ENCODE measurements at regions of chr9 and their contacts with region 1.

Region 1: GRCh38 chr9:99465231-99465907 is 243.3 kb downstream of the SEC61B start:
- DNase-seq: peak in 1 of 2 donors; percentile 79
- ATAC-seq: peak; percentile 76
- H3K4me3 ChIP-seq: no peak overlapping the region
- H3K27ac ChIP-seq: peak overlapping the region in 1 of 2 donors; percentile 70
- H3K4me1 ChIP-seq: peaks cover 0 to 7% of the 10 kb centered on the region in 2 donors
- H3K27me3 ChIP-seq: no peaks in the 10 kb centered on the region

Region 2: GRCh38 chr9:99368341-99369323 is 96.7 kb before region 1 on chr9:
- intact Hi-C with region 1: loop called in 1 of 2 experiments (anchors 10 kb)
- DNase-seq: peak; percentile 76 to 93
- ATAC-seq: peak; percentile 90
- H3K4me3 ChIP-seq: peak overlapping the region; percentile 32 to 42
- H3K27ac ChIP-seq: peak overlapping the region; percentile 38 to 77
- H3K4me1 ChIP-seq: no peaks in the 10 kb centered on the region
- H3K27me3 ChIP-seq: no peaks in the 10 kb centered on the region

Region 3: DNA sequence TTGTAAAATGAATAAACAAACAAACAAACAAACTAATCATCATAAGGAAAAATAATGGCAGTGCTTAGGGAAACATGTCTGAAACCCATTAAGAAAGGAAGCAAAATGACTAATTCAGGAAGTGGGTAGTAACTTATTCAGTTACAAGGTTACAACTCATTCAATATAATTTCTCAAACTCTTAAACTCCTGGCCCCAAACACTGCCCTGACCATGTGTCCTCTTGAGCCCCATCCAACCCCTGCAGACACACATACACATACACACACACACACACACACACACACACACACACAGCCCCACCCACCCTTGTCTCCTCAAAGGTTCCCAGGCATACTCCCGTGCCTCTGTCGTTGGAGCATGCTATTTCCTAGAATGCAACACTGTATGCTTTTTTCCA is 49.4 kb before region 1 on chr9:
- intact Hi-C with region 1: no loop called
- DNase-seq: no peak
- ATAC-seq: no peak
- H3K4me3 ChIP-seq: no peak overlapping the region
- H3K27ac ChIP-seq: no peak overlapping the region
- H3K4me1 ChIP-seq: no peaks in the 10 kb centered on the region
- H3K27me3 ChIP-seq: no peaks in the 10 kb centered on the region

Region 4: GRCh38 chr9:99433555-99433954 is 31.8 kb before region 1 on chr9:
- intact Hi-C with region 1: loop called in 1 of 2 experiments (anchors 5 kb)
- DNase-seq: peak; percentile 72 to 83
- ATAC-seq: peak; percentile 57
- H3K4me3 ChIP-seq: no peak overlapping the region
- H3K27ac ChIP-seq: no peak overlapping the region
- H3K4me1 ChIP-seq: no peaks in the 10 kb centered on the region
- H3K27me3 ChIP-seq: no peaks in the 10 kb centered on the region

Region 5: DNA sequence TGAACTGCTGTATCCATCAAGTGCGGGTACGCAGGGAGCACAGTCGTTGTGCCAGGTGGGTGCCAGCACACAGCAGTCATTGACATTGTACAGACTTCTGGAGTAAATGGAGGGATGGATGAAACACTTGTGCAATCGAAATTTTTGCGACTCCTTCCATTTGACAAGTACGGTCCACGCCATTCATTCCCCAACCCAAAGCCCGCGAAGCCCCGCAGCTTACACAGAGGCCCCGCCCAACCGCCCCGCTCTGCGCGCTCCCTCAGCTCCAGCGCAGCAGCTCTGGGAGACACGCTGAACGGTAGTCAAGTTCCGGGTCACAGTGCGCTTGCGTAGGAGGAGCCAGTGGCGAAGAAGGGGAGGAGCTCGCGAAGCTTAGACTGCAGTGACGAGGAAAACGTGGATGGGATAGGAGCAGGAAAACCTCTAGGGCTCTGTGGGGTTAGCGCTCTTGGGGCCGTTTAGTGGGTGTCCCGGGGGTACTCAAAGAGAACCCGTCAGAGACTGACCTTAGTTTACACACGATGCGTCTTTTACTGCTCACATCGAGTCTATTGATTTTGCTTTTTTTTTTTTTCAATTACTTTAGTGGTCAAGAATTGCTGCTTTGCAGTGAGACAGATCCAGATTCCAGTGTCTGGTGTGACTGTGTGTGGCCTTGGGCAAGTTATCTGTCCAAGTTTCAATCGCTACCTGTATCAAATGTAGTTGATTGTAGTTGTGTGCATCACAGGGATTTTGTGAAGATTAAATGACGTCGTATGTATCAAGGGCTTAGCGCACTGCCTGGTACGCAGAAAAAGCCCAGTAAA is 946.3 kb after region 1 on chr9:
- intact Hi-C with region 1: no loop called
- DNase-seq: peak; percentile 94 to 96
- ATAC-seq: peak; percentile 96
- H3K4me3 ChIP-seq: peak overlapping the region in 1 of 2 donors; percentile 10
- H3K27ac ChIP-seq: no peak overlapping the region
- H3K4me1 ChIP-seq: no peaks in the 10 kb centered on the region
- H3K27me3 ChIP-seq: no peaks in the 10 kb centered on the region